Activated B cell treated with CpG ODN at 0.5 μM for 24 hours (primary cell): ENCODE measurements at regions of chr10 and their contacts with region 1.

Region 1: DNA sequence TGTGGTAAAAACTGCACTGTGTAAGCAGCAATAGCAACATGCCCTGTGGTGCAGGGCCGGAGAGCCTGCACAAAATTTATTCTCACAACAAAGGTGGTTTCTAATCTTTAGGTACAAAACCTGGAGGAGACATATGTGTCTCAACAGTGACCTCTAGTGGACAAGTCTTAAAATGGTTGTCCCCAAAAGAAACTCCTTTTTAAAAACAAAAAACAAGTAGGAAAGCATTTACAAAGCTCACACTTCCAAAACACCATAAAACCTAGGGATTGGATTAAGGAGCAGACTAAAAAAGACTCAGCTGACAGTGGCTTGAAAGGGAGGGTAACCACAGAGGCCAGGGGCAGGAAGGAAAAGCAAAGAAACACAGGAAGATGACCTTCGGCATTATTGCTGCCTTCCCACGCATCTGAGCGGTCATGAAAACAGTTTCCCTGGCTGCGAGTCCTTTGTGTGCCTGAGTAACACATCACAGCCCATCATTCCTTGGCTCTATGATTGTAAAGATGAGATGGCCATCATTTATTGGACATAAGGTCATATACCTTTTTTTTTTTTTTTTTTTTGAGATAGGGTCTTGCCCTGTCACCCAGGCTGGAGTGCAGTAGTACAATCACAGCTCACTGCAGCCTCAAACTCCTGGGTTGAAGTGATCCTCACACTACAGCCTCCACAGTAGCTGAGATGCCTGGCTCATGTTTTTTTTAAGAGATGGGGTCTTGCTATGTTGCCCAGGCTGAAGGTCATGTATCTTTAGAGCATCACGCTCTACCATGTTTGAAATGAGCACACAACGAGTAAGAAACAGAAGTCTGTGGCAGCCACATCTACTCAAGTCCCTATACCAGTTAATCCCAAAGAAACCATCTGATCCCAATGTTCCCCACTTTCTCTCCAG is 39.5 kb downstream of the RSU1 start:
- DNase-seq: no peak
- ATAC-seq: no peak
- H3K4me3 Mint-ChIP-seq: no peak overlapping the region
- H3K27ac Mint-ChIP-seq: no peak overlapping the region
- H3K4me1 Mint-ChIP-seq: peaks cover 29% of the 10 kb centered on the region
- H3K27me3 Mint-ChIP-seq: no peaks in the 10 kb centered on the region
- CTCF ChIP-seq: peak; percentile 43

Region 2: DNA sequence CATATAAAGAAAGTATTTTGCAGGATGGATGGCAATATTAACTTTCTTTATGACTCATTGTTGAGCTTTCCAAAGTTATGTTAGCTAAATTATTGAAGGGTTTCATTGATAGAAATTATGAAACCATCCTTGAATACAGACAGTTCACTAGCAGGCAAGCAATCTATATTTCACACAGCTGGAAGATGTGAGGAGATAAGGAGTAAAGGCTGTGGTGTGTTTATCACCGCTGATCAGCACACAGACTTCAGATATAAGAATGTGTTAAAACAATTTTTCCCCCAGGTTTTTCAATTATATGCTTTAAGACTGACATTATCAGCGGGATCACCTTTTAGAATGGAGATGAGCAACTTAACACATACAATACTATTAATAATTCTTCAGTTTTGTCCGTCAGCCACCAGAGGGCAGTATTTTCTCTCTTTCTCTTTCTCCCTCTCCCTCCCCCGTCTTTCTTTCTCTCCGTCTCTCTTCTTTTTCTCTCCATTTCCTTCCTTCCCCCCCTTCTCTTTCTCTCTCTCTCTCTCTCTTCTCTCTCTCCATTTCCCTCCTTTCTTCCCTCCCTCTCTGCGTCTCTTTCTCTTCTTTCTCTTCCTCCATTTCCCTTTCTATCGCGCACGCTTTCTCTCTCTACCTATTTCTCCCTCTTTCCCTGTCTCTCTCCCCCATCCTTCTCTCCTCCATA is 1343.7 kb before region 1 on chr10:
- CTCF ChIA-PET with region 1: interaction called, 3 read pairs
- POLR2A ChIA-PET with region 1: no interaction called
- intact Hi-C with region 1: loop called (anchors 1 kb)
- DNase-seq: no peak
- ATAC-seq: no peak
- H3K4me3 Mint-ChIP-seq: peak overlapping the region; percentile 60
- H3K27ac Mint-ChIP-seq: no peak overlapping the region
- H3K4me1 Mint-ChIP-seq: peaks cover 3% of the 10 kb centered on the region
- H3K27me3 Mint-ChIP-seq: peaks cover 3% of the 10 kb centered on the region
- CTCF ChIP-seq: peak; percentile 60

Region 3: GRCh38 chr10:15879058-15879457 is 898.7 kb before region 1 on chr10:
- CTCF ChIA-PET with region 1: interaction called, 3 read pairs
- POLR2A ChIA-PET with region 1: no interaction called
- intact Hi-C with region 1: loop called (anchors 1 kb)
- DNase-seq: no peak
- ATAC-seq: no peak
- H3K4me3 Mint-ChIP-seq: no peak overlapping the region
- H3K27ac Mint-ChIP-seq: no peak overlapping the region
- H3K4me1 Mint-ChIP-seq: no peaks in the 10 kb centered on the region
- H3K27me3 Mint-ChIP-seq: peaks cover 45% of the 10 kb centered on the region
- CTCF ChIP-seq: no peak

Region 4: GRCh38 chr10:15901889-15902288 is 875.8 kb before region 1 on chr10:
- CTCF ChIA-PET with region 1: interaction called, 5 read pairs
- POLR2A ChIA-PET with region 1: no interaction called
- intact Hi-C with region 1: loop called (anchors 1 kb)
- DNase-seq: no peak
- ATAC-seq: no peak
- H3K4me3 Mint-ChIP-seq: no peak overlapping the region
- H3K27ac Mint-ChIP-seq: no peak overlapping the region
- H3K4me1 Mint-ChIP-seq: no peaks in the 10 kb centered on the region
- H3K27me3 Mint-ChIP-seq: peaks cover 6% of the 10 kb centered on the region
- CTCF ChIP-seq: no peak